ENCODE measurements at regions of chr15 and their contacts with region 1.

Region 1: DNA sequence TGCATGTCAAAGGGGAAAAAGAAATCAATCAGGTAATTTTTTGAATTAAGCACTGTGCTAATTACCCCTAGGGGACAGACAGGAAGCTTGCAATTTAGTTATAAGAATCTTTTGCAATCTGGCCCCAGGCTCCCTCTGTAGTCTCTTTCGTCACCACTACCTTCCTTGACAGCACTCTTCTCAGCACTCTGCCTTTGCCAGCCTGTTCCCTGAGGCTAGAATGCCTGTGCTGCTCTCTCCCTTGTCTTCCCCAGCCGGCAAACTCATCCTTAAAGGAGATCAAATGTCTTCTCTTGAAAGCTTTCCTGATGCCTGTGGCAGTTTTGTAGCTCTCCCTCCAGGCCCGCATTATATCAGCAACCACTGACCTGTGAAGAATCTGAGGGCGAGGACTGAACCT is 32.4 kb upstream of the PRTG start:
- DNase-seq: no peak
- H3K4me3 ChIP-seq: no peak overlapping the region
- H3K4me3 Mint-ChIP-seq: no peak overlapping the region
- H3K27ac ChIP-seq: no peak overlapping the region
- H3K27ac Mint-ChIP-seq: no peak overlapping the region
- H3K4me1 ChIP-seq: no peaks in the 10 kb centered on the region
- H3K4me1 Mint-ChIP-seq: no peaks in the 10 kb centered on the region
- H3K27me3 ChIP-seq: no peaks in the 10 kb centered on the region
- H3K27me3 Mint-ChIP-seq: peaks cover 12 to 13% of the 10 kb centered on the region in 2 donors

Region 2: DNA sequence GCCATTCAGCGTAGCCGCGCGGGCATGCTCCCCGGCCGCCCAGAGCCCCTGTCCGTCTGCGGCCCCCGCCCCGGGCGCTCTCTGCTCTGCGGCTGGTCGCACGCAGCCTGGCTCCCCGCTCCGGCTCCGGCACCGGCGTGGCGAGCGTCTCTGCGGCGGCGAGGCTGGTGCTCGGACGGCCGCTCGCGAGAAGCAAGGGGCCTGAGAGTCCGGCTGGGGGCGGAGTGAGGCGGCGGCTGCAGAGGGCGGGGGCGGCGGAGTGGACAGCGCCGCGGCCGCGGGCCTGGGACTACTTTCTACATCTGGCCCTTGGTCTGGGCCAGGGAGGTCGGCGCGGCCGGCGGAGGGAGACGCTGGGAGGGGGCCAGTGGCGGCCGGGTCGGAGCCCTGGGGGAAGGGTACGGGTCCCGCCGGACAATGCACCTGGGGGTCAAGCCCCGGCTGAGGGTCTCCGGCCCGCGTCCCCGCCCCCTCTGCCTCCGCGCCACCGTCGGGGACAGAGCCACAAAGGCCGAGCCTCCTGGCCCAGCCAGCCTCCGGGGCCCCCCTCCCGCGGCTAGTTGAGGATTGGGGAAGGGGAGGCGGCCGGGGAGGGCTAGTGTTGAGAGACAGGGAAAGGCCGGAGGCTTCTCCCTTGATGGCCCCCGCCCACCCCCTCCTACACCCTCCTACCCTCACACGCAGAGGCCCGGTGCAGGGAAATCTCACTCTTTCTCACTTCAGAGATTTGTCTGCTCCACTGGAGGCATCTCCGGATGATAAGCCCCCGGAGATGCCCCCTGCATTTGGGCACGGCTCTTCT is 32.2 kb before region 1 on chr15 and contains the start of gene PRTG:
- CTCF ChIA-PET with region 1: no interaction called
- POLR2A ChIA-PET with region 1: no interaction called
- intact Hi-C with region 1: no loop called
- DNase-seq: no peak
- H3K4me3 ChIP-seq: peak within 1 kb of the TSS; percentile 11 to 45
- H3K4me3 Mint-ChIP-seq: peak within 1 kb of the TSS; percentile 58 to 85 (median 64)
- H3K27ac ChIP-seq: no peak within 1 kb of the TSS
- H3K27ac Mint-ChIP-seq: no peak within 1 kb of the TSS
- H3K4me1 ChIP-seq: peaks cover 12% of the 10 kb centered on the region
- H3K4me1 Mint-ChIP-seq: peaks cover 0 to 11% (median 2%) of the 10 kb centered on the region in 4 donors
- H3K27me3 ChIP-seq: peaks cover 22% of the 10 kb centered on the region
- H3K27me3 Mint-ChIP-seq: peaks cover 18 to 20% of the 10 kb centered on the region in 2 donors
- total RNA-seq, gene PRTG: not detected

Region 3: DNA sequence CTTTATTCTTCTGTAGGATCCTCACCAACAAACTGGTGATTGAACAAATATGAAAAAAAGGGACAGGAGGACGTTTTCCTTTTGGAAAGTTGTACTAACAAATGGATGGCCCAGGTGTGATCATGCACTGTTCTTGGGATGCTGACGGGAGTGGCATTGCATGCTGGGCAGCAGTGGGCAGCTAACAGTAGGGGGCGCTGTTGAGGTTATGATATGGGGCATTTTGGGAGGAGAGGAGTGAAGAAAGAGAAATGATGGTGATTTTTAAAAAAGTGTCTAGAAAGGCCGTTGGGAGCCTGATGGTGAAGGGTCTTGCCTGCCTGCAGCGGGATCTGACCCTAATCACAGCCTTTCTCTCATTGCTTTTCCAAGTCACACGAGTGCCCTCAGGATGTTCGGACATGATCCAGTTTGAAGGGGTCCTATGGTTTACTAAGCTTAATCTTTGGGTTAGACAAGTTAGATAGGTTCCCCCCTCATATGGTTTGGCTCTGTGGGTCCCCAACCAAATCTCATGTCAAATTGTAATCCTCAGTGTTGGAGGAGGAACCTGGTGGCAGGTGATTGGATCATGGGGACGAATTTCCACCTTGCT is 13.8 kb after region 1 on chr15:
- CTCF ChIA-PET with region 1: interaction called, 14 read pairs
- POLR2A ChIA-PET with region 1: no interaction called
- intact Hi-C with region 1: no loop called
- DNase-seq: peak in 4 of 5 donors; percentile 9 to 37 (median 22)
- H3K4me3 ChIP-seq: no peak overlapping the region
- H3K4me3 Mint-ChIP-seq: no peak overlapping the region
- H3K27ac ChIP-seq: no peak overlapping the region
- H3K27ac Mint-ChIP-seq: no peak overlapping the region
- H3K4me1 ChIP-seq: no peaks in the 10 kb centered on the region
- H3K4me1 Mint-ChIP-seq: no peaks in the 10 kb centered on the region
- H3K27me3 ChIP-seq: no peaks in the 10 kb centered on the region
- H3K27me3 Mint-ChIP-seq: peaks cover 10 to 16% of the 10 kb centered on the region in 2 donors